ENCODE measurements at regions of chr1 and their contacts with region 1.

Region 1: GRCh38 chr1:95233737-95234500 is at the start of gene RWDD3:
- DNase-seq: peak; percentile 96
- ATAC-seq: peak; percentile 96 to 97
- total RNA-seq, gene RWDD3: 12.3 to 17.7 TPM

Region 2: GRCh38 chr1:95035536-95035935 is 198.4 kb before region 1 on chr1:
- intact Hi-C with region 1: no loop called
- DNase-seq: no peak
- ATAC-seq: no peak

Region 3: GRCh38 chr1:95072532-95073419 is 161.1 kb before region 1 on chr1 and contains the start of gene ALG14:
- intact Hi-C with region 1: loop called (anchors 5 kb)
- DNase-seq: peak; percentile 95
- ATAC-seq: peak; percentile 99
- total RNA-seq, gene ALG14: 2.5 to 4.3 TPM

Region 4: GRCh38 chr1:95084317-95085176 is 149.4 kb before region 1 on chr1:
- intact Hi-C with region 1: loop called in 1 of 2 experiments (anchors 5 kb)
- DNase-seq: no peak
- ATAC-seq: peak in 1 of 2 donors; percentile 43

Region 5: DNA sequence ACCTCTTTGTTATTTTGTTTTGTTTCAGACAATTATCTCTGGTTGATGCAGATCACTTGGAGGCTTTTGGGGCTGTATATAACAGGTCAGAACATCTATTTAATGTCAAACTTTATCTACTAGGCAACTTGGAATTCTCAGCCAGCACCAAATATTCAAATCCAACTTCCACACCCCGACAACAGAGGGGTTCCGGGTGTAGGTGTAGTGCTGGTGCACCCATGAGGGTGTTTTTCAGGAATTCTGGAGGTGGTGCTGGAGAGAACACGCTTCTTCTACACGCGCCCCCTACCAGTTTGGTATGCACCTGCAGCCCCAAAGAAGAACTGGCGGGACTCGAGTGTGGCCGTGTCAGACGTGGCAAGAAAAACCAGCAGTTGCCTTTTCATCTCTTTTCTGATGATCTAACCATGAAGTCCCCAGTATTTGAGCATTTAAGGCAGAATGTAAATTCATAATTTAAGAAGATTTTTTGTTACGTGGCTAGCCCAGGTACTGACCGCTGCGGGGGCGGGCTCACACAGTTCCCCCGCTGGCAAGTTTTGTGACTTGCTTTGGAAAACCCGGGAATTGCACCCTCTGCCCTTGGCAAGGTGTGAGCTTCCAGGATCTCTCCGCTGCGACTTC is 117.2 kb before region 1 on chr1:
- intact Hi-C with region 1: loop called (anchors 5 to 10 kb)
- DNase-seq: peak; percentile 66
- ATAC-seq: peak; percentile 76 to 85

Region 6: DNA sequence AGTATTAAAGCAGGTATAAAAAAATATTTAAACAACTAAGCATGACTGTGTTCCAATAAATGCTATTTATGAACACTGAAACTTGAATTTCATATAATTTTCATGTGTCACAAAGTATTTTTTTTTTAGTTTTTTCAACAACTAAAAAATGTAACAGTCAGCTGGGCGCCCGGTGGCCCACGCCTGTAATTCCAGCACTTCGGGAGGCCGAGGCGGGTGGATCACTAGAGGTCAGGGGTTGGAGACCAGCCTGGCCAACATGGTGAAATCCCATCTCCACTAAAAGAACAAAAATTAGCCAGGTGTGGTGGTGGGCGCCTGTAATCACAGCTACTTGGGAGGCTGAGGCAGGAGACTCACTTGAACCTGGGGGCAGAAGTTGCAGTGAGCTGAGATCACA is 42.5 kb after region 1 on chr1:
- intact Hi-C with region 1: no loop called
- DNase-seq: no peak
- ATAC-seq: no peak

Measured in left cardiac atrium (tissue), 4 donors.